HEK293 (cell line): ENCODE measurements at regions of chr1 and their contacts with region 1.

Region 1: GRCh38 chr1:212665241-212666115 is 34.2 kb downstream of the BATF3 start:
- H3K4me3 ChIP-seq: peak overlapping the region; percentile 82
- H3K27ac ChIP-seq: no peak overlapping the region; the same call in 1 of the 2 replicates
- H3K4me1 ChIP-seq: 0 out of 2 replicates have a peak, but pooled peaks cover 3% of the 10 kb centered on the region
- CTCF ChIP-seq: peak; percentile 99

Region 2: DNA sequence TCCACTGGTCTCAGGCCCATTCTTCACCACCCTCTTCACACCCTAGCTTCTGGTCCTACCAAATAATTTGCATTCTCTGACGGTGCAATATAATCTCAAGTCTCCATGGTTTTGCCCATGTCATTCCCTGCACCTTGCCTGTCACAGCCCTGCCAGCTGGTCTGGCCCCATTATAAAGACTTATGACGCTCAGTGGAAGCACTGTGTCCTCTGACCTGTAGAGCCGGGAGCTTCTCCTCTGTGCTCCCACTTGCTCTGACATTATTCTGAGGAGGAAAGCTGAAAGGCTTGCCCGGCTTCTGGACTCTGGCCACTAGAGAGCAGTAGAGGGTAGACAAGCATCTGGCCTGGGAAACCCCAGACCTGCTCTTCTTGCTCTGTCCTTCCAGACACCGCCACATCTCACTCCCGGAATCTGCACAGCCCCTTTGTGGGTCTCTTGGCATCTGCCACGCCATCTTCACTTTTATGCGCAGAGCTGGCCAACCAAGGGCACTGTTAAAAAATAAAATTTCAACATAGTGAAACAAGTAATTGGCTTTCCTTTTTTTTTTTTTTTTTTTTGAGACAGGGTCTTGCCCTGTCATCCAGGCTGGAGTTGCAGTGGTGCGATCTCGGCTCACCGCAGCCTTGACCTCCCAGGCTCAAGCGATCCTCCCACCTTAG is 188.3 kb before region 1 on chr1:
- CTCF ChIA-PET with region 1: interaction called, 16 read pairs
- POLR2A ChIA-PET with region 1: no interaction called
- H3K4me3 ChIP-seq: no peak overlapping the region
- H3K27ac ChIP-seq: no peak overlapping the region
- H3K4me1 ChIP-seq: no peaks in the 10 kb centered on the region
- CTCF ChIP-seq: peak; percentile 73

Region 3: GRCh38 chr1:212678456-212679410 is 13.3 kb after region 1 on chr1:
- CTCF ChIA-PET with region 1: interaction called, 11 read pairs
- POLR2A ChIA-PET with region 1: no interaction called
- H3K4me3 ChIP-seq: no peak overlapping the region
- H3K27ac ChIP-seq: no peak overlapping the region
- H3K4me1 ChIP-seq: no peaks in the 10 kb centered on the region
- CTCF ChIP-seq: no peak

Region 4: GRCh38 chr1:212700892-212701819 is 35.7 kb after region 1 on chr1:
- CTCF ChIA-PET with region 1: interaction called, 15 read pairs
- POLR2A ChIA-PET with region 1: interaction called, 3 read pairs
- H3K4me3 ChIP-seq: peak overlapping the region; percentile 47
- H3K27ac ChIP-seq: peak overlapping the region; percentile 63; the same call in 1 of the 2 replicates
- H3K4me1 ChIP-seq: peaks cover 8% of the 10 kb centered on the region
- CTCF ChIP-seq: peak; percentile 63; the same call in 1 of the 2 replicates

Region 5: GRCh38 chr1:212777151-212777550 is 111.7 kb after region 1 on chr1:
- CTCF ChIA-PET with region 1: interaction called, 21 read pairs
- POLR2A ChIA-PET with region 1: no interaction called
- H3K4me3 ChIP-seq: no peak overlapping the region
- H3K27ac ChIP-seq: no peak overlapping the region
- H3K4me1 ChIP-seq: no peaks in the 10 kb centered on the region
- CTCF ChIP-seq: no peak

Region 6: DNA sequence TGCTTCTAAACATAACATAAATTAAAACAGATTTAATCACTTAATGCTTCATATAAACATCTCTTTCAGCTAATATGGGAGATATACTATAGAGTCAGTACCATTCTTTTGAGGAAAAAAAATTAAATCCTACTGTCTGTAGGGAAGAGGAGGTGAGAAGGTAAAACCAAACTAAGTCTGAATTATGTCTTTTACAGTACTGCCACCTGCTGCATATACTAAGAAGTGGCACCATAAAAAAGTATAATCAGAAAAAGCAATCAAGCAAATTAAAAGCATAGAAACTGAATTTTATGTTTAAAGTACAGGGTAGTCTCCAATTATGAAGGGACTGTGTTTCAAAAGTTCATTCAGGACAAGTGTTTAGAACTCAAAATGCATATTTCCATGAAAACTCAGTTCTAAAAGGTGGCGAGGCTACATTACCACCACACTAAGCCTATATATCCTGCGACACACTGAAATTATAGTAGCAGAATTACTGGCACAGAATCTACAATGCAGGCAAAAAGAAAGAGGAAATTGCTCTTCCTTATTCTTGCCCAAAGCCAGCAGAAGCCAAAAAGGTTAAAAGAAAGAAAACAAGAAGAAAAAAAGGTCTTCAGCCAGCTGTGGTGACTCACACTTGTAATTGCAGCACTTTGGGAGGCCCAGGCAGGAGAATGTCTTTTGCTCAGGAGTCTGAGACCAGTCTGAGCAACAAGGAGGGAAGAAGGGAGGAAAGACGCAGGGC is 117.1 kb after region 1 on chr1:
- CTCF ChIA-PET with region 1: interaction called, 21 read pairs
- POLR2A ChIA-PET with region 1: no interaction called
- H3K4me3 ChIP-seq: no peak overlapping the region
- H3K27ac ChIP-seq: no peak overlapping the region
- H3K4me1 ChIP-seq: no peaks in the 10 kb centered on the region
- CTCF ChIP-seq: peak; percentile 57

Region 7: GRCh38 chr1:212873518-212873917 is 208.0 kb after region 1 on chr1:
- CTCF ChIA-PET with region 1: no interaction called
- POLR2A ChIA-PET with region 1: no interaction called
- H3K4me3 ChIP-seq: no peak overlapping the region
- H3K27ac ChIP-seq: no peak overlapping the region
- H3K4me1 ChIP-seq: no peaks in the 10 kb centered on the region
- CTCF ChIP-seq: no peak